ENCODE measurements at regions of chr2 and their contacts with region 1.

Region 1: GRCh38 chr2:98385050-98385699 is 38.9 kb downstream of the CNGA3 start:
- DNase-seq: peak; percentile 67
- ATAC-seq: peak; percentile 96
- H3K4me3 ChIP-seq: no peak overlapping the region
- H3K27ac ChIP-seq: no peak overlapping the region
- H3K4me1 ChIP-seq: no peaks in the 10 kb centered on the region
- H3K27me3 ChIP-seq: peaks cover 3% of the 10 kb centered on the region; the same call in 1 of the 2 replicates
- CTCF ChIP-seq: peak; percentile 97

Region 2: DNA sequence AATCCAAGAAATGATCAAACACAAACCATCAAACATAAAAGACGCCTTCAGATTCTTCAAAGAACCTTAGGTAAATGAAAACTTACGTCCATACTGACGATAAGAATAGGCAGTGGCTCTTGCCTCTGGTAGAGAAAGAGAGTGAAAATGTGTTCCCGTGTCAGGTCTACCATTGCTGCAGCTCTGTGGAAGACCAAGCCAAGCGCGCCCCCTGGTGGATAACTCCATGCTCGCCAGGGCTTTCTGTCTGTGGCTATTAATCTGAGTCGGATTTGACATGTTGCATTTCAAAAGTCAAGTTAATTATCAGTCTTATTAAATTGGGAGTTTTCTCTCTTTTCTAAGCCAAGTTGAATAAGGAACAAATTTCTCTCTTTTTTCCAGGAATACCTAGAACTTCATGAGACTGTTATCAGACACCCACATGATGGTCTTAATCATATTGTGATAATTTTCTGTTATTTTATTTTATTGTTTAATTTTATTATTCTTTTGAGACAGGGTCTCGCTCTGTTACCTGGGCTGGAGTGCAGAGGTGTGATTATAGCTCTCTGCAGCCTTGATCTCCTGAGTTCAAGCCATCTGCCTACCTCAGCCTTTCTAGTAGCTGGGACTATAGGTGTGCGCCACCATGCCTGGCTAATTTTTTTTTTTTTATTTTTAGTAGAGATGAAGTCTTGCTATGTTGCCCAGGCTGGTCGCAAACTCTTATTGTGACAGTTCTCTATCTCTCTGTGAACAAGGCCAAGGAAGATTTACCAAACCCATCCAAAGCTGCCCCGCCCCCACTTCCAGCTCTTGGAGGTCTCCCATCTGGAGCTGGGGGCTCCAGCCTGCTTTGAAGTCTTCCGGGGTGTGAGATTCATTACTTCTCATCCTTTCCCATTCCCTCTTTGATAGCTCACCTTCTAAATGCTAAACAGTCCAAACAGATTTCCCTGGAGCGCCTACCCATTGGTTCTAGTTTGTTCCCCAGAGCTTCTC is 687.6 kb before region 1 on chr2:
- CTCF ChIA-PET with region 1: interaction called, 4 read pairs
- POLR2A ChIA-PET with region 1: no interaction called
- in situ Hi-C with region 1: no loop called
- intact Hi-C with region 1: loop called (anchors 10 kb)
- DNase-seq: peak; percentile 61
- ATAC-seq: peak; percentile 95
- H3K4me3 ChIP-seq: no peak overlapping the region
- H3K27ac ChIP-seq: no peak overlapping the region
- H3K4me1 ChIP-seq: no peaks in the 10 kb centered on the region
- H3K27me3 ChIP-seq: no peaks in the 10 kb centered on the region
- CTCF ChIP-seq: peak; percentile 93

Region 3: DNA sequence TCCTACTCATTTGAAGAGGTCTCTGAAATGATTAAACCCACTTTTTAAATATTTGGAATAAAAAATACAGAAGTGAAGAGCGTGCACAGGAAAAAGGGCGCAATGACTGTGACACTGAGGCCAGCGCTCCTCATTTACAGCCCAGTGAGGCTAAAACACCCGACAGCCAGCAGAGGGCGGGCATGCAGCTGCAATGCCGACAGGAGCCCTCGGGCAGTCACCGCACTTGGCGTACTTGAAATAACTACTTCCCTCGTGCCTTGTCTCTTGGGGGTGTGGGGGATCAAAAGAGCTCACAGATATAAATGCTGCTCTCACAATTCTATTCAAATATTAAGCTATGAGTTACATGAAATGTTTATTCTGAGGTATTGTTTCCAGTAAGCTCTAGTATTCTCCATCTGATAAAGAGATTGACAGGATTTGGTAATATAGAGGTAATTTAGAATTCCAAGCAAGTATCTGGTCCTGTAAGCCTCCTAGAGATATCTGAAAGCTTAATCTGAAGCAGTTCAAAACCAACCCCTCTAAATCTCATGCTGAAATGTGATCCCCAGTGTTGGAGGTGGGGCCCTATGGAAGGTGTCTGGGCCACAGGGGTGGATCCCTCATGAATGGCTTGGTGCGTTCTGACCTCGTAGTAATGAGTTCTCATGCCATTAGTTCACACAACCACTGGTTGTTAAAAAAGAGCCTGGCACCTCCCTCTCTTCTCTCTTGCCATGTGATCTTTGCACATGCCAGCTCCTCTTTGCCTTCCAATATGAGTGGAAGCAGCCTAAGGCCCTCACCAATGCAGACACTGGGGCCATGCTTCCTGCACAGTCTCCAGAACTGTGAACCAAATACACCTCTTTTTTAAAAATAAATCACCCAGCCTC is 578.2 kb before region 1 on chr2:
- CTCF ChIA-PET with region 1: no interaction called
- POLR2A ChIA-PET with region 1: no interaction called
- in situ Hi-C with region 1: no loop called
- intact Hi-C with region 1: loop called (anchors 2 kb)
- DNase-seq: peak; percentile 43
- ATAC-seq: peak; percentile 99
- H3K4me3 ChIP-seq: no peak overlapping the region
- H3K27ac ChIP-seq: no peak overlapping the region
- H3K4me1 ChIP-seq: no peaks in the 10 kb centered on the region
- H3K27me3 ChIP-seq: no peaks in the 10 kb centered on the region
- CTCF ChIP-seq: peak; percentile 96

Region 4: GRCh38 chr2:97995734-97996624 is 389.2 kb before region 1 on chr2 and contains the start of gene TMEM131:
- CTCF ChIA-PET with region 1: no interaction called
- POLR2A ChIA-PET with region 1: no interaction called
- in situ Hi-C with region 1: no loop called
- intact Hi-C with region 1: loop called (anchors 10 kb)
- DNase-seq: peak; percentile 69
- ATAC-seq: peak; percentile 96
- H3K4me3 ChIP-seq: peak within 1 kb of the TSS; percentile 81 to 96
- H3K27ac ChIP-seq: peak within 1 kb of the TSS; percentile 92
- H3K4me1 ChIP-seq: peaks cover 26% of the 10 kb centered on the region
- H3K27me3 ChIP-seq: no peaks in the 10 kb centered on the region
- CTCF ChIP-seq: no peak
- total RNA-seq, gene TMEM131: 43.4 TPM